Cardiac septum (tissue), 1 donor: ENCODE measurements at regions of chr9 and their contacts with region 1.

Region 1: GRCh38 chr9:18255158-18255629 is 218.8 kb upstream of the ADAMTSL1 start:
- DNase-seq: peak; percentile 81

Region 2: GRCh38 chr9:18442629-18443491 is 187.7 kb after region 1 on chr9:
- intact Hi-C with region 1: loop called (anchors 2 kb)
- DNase-seq: peak; percentile 81

Region 3: GRCh38 chr9:18459958-18460584 is 204.9 kb after region 1 on chr9:
- intact Hi-C with region 1: loop called (anchors 5 kb)
- DNase-seq: no peak

Region 4: DNA sequence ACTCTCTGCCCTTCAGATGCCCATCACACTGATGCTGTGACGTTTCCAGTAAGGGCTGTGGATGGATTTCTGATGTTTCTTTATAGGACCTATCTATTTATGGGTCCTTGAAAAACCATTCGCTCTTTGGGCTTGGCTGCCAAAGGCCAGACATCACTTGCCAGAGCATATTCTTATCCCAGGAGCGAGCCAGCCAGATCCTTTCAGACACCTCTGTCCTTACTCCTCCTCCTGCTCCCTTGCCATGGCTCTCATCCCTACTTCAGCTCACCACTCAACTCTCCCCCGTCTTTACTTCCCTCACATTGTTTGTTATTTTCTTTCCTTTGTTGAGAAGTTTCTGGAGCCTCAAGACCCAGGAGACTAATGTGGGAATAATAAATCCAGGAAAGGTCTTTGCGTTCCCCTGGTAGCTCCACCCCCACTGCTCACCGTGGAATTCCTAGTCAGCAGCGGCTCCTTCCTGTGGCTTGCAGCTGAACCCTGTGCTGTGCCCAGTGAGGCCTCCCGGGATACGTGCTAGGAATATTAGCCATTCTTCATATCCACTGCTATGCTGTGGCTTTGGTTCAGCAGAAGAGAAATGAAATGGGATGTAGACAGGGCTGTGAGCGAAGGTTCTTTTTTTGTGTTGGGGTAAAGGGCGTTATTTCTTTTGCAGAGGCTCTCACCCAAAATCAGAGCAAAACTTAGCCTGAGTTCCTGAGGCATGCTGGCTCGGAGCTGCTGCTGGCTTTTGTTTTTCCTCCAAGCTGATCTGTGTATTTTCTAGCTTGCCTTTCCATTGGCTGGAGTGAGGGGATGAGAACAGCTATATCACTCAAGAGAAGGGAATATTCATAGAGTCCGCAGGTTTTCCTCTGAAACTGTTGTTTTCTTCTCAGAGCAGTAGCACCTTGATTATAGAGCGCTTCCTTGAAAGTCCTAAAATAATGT is 606.7 kb after region 1 on chr9:
- intact Hi-C with region 1: loop called (anchors 5 kb)
- DNase-seq: peak; percentile 81

Region 5: GRCh38 chr9:19018201-19018600 is 763.0 kb after region 1 on chr9:
- intact Hi-C with region 1: loop called (anchors 5 kb)
- DNase-seq: no peak

Region 6: GRCh38 chr9:19028835-19029451 is 773.7 kb after region 1 on chr9:
- intact Hi-C with region 1: loop called (anchors 5 kb)
- DNase-seq: no peak

Region 7: DNA sequence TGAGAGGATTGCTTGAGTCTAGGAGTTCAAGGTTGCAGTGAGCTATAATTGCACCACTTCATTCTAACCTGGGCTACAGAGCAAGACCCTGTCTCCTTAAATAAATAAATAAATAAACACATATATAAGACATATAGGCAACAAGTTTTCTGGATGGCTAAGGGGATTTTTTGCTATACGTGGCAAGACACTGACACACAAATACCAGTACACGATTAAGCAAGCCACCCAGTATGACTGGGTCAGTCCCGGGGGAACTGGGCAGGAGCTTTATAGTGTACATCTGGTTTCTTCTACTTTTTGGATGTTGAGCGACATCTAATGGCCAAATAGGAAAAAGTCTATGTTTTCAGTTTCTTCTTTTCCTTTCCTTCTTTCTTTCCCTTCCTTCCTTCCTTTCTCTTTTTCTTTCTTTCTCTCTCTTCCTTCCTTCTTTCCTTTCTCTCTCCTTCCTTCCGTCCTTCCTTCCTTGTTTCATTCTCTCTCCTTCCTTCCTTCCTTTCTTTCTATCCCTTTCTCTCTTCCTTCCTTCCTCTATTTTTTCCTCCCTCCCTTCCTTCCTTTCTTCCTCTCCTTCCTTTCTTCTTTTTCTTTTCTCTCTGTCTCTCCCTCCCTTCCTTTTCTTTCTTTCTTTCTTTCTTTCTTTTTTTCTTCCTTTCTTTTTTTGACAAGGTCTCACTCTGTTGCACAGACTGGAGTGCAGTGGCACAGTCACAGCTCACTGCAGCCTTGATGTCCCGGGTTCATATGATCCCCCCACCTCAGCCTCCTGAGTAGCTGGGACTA is 919.1 kb after region 1 on chr9:
- intact Hi-C with region 1: loop called (anchors 10 kb)
- DNase-seq: no peak